Activated CD4-positive, alpha-beta T cell treated with anti-CD3 and anti-CD28 coated beads for 36 hours (primary cell): ENCODE measurements at regions of chr14 and their contacts with region 1.

Region 1: GRCh38 chr14:105045710-105046326 is 19.4 kb downstream of the GPR132 start:
- DNase-seq: peak; percentile 96
- ATAC-seq: peak; percentile 89
- H3K4me3 Mint-ChIP-seq: no peak overlapping the region
- H3K27ac Mint-ChIP-seq: peak overlapping the region; percentile 25
- H3K4me1 Mint-ChIP-seq: peaks cover 14% of the 10 kb centered on the region
- H3K27me3 Mint-ChIP-seq: peaks cover 9% of the 10 kb centered on the region

Region 2: GRCh38 chr14:104586832-104587620 is 458.8 kb before region 1 on chr14:
- CTCF ChIA-PET with region 1: no interaction called
- POLR2A ChIA-PET with region 1: no interaction called
- intact Hi-C with region 1: no loop called
- DNase-seq: no peak
- ATAC-seq: no peak
- H3K4me3 Mint-ChIP-seq: no peak overlapping the region
- H3K27ac Mint-ChIP-seq: no peak overlapping the region
- H3K4me1 Mint-ChIP-seq: no peaks in the 10 kb centered on the region
- H3K27me3 Mint-ChIP-seq: peaks cover 6% of the 10 kb centered on the region

Region 3: DNA sequence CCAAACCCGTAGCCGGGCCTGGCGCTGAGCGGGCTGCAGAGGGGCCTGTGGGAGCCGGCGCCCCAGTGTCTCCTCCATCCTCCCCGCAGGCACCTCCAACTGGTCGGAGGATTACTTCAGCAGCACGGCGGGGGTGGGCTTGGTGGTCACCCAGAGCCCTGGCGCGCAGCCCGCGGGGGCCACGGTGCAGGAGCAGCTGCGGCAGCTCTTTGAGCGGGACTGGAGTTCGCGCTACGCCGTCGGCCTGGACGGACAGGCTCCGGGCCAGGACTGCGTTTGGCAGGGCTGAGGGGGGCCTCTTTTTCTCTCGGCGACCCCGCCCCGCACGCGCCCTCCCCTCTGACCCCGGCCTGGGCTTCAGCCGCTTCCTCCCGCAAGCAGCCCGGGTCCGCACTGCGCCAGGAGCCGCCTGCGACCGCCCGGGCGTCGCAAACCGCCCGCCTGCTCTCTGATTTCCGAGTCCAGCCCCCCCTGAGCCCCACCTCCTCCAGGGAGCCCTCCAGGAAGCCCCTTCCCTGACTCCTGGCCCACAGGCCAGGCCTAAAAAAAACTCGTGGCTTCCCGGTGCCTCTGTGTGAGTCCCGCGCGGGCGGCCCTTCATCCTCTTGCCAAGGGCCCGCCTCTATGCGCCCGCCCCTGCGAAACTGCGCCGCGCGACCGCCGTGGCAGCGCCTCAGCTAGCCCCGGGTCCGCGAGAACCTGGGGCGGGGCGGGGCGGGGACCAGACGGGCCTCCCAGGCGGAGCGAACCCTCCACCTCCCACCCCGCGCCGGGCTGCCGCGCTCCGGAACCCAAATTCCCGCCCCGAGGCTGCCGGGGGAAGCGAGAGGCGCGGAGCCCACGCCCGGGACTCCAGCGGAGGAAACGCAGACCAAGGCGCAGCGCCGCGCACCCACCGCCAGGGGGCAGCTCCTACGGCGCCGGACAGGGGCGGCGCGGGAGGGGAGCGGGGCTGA is 112.9 kb before region 1 on chr14:
- CTCF ChIA-PET with region 1: interaction called, 4 read pairs
- POLR2A ChIA-PET with region 1: no interaction called
- intact Hi-C with region 1: loop called in 1 of 2 experiments (anchors 1 kb)
- DNase-seq: peak; percentile 93
- ATAC-seq: peak; percentile 96
- H3K4me3 Mint-ChIP-seq: peak overlapping the region; percentile 32
- H3K27ac Mint-ChIP-seq: no peak overlapping the region
- H3K4me1 Mint-ChIP-seq: no peaks in the 10 kb centered on the region
- H3K27me3 Mint-ChIP-seq: peaks cover 8% of the 10 kb centered on the region

Region 4: DNA sequence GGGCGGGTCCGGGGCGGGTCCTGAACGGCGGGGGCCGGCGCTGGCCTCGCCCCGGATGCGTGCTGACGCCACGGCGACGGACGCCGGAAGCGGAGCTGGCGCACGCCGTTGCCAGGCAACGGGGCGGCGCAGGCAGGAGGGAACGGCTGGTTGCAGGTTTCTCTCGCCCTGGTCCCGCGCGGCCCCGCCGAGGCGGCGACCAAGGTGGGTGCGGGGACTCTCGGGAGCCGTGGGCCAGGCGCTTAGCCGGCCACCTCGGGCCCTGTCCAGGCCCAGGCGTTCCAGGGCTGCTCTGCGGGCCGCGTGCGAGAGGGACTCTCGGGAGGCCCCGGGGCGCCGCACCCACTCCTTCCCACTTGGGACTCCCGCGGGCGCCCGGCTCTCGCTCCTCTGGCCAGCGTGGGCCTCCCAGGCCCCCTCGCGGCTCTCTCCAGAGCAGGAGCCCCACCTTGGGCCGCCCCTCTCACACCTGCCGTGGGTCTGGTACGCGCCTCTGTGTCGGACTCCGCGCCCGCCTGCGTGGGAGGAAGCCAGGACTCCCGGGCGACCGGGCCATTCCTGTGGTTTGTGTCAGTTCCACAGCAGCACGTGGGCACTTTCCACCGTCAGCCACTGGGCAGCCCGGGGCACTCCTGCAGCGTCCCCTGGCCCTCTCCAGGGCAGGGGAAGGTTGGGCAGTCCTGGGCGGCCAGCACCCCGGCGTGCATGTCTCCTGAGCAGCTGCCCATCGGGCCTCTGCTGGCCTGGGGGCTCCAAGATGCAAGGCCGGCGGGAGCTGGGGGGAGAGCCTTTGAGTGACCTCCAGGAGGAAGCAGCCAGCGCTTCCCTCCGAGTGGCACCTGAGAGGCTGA is 59.9 kb before region 1 on chr14 and contains the start of gene CLBA1:
- CTCF ChIA-PET with region 1: interaction called, 14 read pairs
- POLR2A ChIA-PET with region 1: interaction called, 3 read pairs
- intact Hi-C with region 1: loop called in 1 of 2 experiments (anchors 2 kb)
- DNase-seq: peak; percentile 93
- ATAC-seq: peak; percentile 99
- H3K4me3 Mint-ChIP-seq: peak within 1 kb of the TSS; percentile 64
- H3K27ac Mint-ChIP-seq: peak within 1 kb of the TSS; percentile 47
- H3K4me1 Mint-ChIP-seq: peaks cover 5% of the 10 kb centered on the region
- H3K27me3 Mint-ChIP-seq: no peaks in the 10 kb centered on the region
- total RNA-seq, gene CLBA1: 1.1 to 1.9 TPM

Region 5: GRCh38 chr14:105034314-105035039 is 11.3 kb before region 1 on chr14:
- CTCF ChIA-PET with region 1: interaction called, 17 read pairs
- POLR2A ChIA-PET with region 1: interaction called, 4 read pairs
- intact Hi-C with region 1: no loop called
- DNase-seq: no peak
- ATAC-seq: no peak
- H3K4me3 Mint-ChIP-seq: no peak overlapping the region
- H3K27ac Mint-ChIP-seq: no peak overlapping the region
- H3K4me1 Mint-ChIP-seq: peaks cover 10% of the 10 kb centered on the region
- H3K27me3 Mint-ChIP-seq: peaks cover 3% of the 10 kb centered on the region

Region 6: DNA sequence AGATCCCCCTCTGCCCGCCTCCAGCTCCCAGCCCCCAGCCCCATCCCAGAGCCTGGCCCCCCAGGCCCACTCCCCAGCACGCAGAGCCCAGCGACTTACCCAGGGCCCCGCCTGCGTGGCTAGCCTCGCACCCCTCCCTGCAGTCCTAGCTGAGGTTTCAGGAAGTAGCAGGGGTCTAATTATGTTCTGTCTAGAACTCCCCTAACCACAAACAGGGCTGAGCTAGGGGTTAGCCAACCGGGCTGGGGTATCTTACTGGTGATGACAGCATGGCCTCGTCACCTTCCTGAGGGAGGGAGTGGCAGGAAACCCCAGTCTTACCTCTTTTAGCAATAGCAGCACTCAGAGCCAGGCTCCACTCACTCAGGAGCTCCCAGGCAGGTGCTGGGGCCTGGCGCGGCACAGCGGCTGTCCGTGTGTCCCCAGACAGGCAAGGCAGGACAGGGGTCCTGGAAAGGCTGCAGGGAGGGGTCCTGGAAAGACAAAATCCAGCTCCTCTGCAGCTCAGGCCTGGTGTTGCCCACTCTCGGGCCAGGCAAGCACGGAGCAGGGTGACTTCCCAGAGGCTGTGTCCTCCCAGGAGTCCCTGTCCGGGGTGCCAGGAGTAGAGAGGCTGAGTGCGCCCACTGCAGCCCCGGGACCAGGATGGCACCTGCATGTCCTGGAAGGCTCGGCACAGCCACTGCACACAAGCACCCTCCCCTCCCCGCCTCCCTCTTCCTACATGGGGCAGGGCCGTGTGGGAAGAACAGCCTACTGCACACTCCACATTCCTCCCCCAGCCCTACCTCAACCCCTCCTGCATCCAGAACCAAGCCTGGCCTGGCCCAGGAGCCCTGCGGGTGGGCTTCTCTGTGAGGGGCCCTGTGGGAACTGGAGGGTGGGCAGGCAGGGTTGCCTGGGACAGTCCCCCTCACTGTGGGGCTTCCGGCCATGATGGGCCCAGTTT is 19.7 kb after region 1 on chr14 and contains the start of gene GPR132:
- CTCF ChIA-PET with region 1: interaction called, 22 read pairs
- POLR2A ChIA-PET with region 1: interaction called, 3 read pairs
- intact Hi-C with region 1: loop called in 1 of 2 experiments (anchors 2 kb)
- DNase-seq: peak; percentile 93
- ATAC-seq: peak; percentile 78
- H3K4me3 Mint-ChIP-seq: peak within 1 kb of the TSS; percentile 92
- H3K27ac Mint-ChIP-seq: peak within 1 kb of the TSS; percentile 96
- H3K4me1 Mint-ChIP-seq: peaks cover 74% of the 10 kb centered on the region
- H3K27me3 Mint-ChIP-seq: no peaks in the 10 kb centered on the region
- total RNA-seq, gene GPR132: 27.7 to 35.4 TPM